ENCODE measurements at regions of chr1 and their contacts with region 1.

Region 1: DNA sequence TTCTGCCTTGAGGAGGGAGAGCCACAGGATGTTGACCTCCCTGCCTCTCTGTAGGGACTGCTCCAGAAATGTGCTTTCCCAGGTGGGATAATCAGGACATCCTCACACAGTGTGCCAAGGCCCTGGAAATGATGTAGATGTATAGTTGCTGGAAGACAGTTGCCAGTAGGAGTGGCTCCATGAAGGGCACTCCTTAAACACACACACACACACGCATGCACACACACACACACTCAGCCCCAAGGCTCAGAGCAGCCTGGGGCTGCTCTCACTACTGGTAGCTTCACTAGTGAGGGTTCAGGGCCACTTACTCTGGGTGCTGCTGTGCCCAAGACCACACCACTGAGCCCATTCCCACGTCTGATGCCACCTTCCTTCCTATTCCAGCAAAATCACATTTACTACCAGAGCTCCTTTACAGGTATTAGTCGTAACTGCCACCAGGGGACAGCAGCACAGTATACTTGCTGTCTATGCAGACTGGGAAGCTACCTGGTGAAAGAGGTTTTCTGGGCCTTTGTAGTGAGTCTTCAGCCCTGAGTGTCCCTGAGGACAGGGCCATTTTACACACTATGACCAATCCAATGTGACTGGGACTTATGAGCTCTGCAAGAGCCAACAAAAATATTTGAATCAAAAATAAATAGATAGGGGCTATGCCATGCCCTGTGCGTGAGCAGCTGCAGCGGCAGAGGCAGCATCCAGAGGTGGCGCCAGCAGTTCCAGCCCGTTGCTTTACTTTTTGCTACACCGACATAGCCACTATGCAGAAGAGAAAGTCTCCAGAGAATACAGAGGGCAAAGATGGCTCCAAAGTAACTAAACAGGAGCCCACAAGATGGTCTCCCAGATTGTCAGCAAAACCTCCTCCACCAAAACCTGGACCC is 15.0 kb downstream of the CRNN start:
- DNase-seq: peak; percentile 54
- ATAC-seq: peak; percentile 86
- H3K4me3 ChIP-seq: no peak overlapping the region
- H3K27ac ChIP-seq: no peak overlapping the region
- H3K4me1 ChIP-seq: no peaks in the 10 kb centered on the region
- H3K27me3 ChIP-seq: peaks cover 12% of the 10 kb centered on the region; the same call in 1 of the 2 replicates
- CTCF ChIP-seq: peak; percentile 64

Region 2: GRCh38 chr1:152347116-152347728 is 51.8 kb before region 1 on chr1:
- CTCF ChIA-PET with region 1: no interaction called
- POLR2A ChIA-PET with region 1: no interaction called
- intact Hi-C with region 1: no loop called
- DNase-seq: peak; percentile 91
- ATAC-seq: peak; percentile 76
- H3K4me3 ChIP-seq: no peak overlapping the region
- H3K27ac ChIP-seq: no peak overlapping the region
- H3K4me1 ChIP-seq: no peaks in the 10 kb centered on the region
- H3K27me3 ChIP-seq: peaks cover 5% of the 10 kb centered on the region; the same call in 1 of the 2 replicates
- CTCF ChIP-seq: peak; percentile 95

Region 3: DNA sequence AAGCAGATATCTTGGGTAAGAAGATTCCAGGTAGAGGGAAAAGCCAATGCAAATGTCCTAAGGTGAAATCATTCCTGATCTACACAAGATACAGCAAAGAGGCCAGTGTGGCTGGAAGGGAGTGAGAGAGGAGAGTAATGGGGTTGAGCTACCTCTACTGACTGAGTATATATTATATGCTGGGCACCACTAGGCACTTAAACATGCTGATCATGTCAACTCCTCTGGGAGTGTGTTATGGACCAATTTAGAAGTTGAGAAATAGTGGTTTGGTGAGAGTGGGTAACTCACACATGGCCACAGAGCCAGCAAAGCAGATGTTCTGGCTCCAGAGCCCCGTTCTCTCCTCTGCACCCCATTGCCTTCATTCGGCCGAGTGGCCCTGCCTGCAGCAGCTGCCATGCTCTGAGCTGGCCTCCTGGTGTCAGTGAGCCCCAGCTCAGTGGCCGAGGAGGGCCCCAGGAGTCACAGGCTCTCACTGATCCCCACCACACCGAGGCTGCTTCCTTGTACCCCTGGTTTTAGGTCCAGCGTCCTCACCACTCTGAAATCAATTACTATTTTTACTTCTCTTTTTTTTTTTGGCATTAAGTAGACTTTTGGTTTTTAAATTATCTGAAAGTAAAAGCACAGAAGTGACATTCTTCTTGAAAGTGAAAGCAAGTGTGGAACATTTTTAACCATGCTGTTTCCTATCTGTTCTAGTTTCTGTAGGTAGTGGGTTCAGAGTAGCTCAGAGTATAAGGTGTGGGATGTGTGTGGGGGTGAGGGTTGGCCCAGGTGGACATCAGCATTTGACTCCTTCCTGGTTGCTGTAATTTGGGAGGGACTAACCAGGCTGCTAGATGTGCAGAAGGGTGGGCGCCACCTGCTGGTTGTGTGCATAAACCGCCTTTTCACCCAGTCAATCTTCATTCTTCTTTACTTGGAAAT is 60.8 kb after region 1 on chr1:
- CTCF ChIA-PET with region 1: interaction called, 32 read pairs
- POLR2A ChIA-PET with region 1: no interaction called
- intact Hi-C with region 1: loop called (anchors 1 kb)
- DNase-seq: peak; percentile 76
- ATAC-seq: peak; percentile 66
- H3K4me3 ChIP-seq: no peak overlapping the region
- H3K27ac ChIP-seq: no peak overlapping the region
- H3K4me1 ChIP-seq: no peaks in the 10 kb centered on the region
- H3K27me3 ChIP-seq: no peaks in the 10 kb centered on the region
- CTCF ChIP-seq: peak; percentile 94

Region 4: GRCh38 chr1:152906023-152906565 is 507.0 kb after region 1 on chr1:
- CTCF ChIA-PET with region 1: no interaction called
- POLR2A ChIA-PET with region 1: no interaction called
- intact Hi-C with region 1: no loop called
- DNase-seq: peak; percentile 87
- ATAC-seq: peak; percentile 43
- H3K4me3 ChIP-seq: no peak overlapping the region
- H3K27ac ChIP-seq: peak overlapping the region; percentile 75
- H3K4me1 ChIP-seq: peaks cover 34% of the 10 kb centered on the region
- H3K27me3 ChIP-seq: no peaks in the 10 kb centered on the region
- CTCF ChIP-seq: no peak